Posterior vena cava (tissue), 2 donors: ENCODE measurements at regions of chr13 and their contacts with region 1.

Region 1: GRCh38 chr13:94079876-94080275 is 399.6 kb downstream of the DCT start:
- DNase-seq: no peak

Region 2: DNA sequence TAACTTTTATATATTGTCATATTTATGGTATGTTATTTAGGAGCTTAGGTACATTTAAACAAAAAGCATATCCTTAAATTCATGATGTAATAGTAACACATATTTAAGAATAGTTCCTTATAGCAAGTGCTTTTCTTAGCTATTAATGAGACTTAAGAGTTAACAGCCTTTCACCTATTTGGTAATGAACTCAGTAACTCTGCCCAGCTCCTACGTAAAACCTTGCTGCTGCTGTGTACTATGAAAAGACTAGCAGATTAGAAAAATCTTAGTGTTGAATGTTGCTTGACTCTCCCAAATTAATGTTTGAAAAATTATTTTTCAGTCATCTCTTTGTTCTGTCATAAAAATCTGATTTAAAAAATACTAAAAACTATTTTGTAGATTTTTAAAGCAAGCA is 528.7 kb after region 1 on chr13:
- intact Hi-C with region 1: loop called in 1 of 2 experiments (anchors 5 kb)
- DNase-seq: no peak